A673 (cell line): ENCODE measurements at regions of chr15 and their contacts with region 1.

Region 1: DNA sequence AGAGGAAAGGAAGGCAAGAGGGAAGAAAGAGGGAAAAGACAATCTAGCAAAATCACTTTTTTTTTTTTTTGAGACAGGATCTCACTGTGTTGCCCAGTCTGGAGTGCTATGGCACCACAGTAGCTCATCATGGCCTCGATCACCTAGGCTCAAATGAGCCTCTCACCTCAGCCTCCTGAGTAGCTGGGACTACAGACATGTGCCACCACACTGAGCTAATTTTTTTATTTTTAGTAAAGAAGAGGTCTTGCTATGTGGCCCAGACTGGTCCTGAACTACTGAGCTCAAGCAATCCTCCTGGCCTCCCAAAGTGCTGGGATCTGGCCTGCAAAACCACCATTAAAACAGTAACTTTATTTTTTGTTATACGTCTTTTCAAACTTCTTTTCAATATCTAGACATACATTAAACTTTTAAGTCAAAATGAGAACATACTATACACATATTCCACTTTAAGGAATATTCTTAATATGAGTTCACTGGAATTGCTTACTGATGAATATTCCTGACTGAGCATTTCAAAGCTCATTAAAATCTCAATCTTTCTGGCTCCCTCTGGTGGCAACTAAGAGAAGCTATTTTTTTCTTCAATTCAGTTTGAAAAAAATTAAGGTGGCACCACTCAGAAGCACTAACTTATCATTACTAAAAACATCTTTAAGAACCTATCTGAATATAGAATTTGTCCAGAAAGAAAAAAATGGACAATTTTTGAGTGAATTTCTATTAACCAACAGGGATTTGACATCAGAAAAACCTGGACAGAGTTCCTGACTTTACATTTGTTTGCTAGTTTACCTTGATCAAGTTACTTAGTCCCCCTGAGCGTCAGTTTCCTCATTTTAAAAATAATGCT is 40.9 kb downstream of the UACA start:
- DNase-seq: peak; percentile 62
- H3K4me3 ChIP-seq: no peak overlapping the region
- H3K27ac ChIP-seq: no peak overlapping the region
- H3K4me1 ChIP-seq: no peaks in the 10 kb centered on the region
- H3K27me3 ChIP-seq: no peaks in the 10 kb centered on the region
- CTCF ChIP-seq: peak; percentile 79

Region 2: DNA sequence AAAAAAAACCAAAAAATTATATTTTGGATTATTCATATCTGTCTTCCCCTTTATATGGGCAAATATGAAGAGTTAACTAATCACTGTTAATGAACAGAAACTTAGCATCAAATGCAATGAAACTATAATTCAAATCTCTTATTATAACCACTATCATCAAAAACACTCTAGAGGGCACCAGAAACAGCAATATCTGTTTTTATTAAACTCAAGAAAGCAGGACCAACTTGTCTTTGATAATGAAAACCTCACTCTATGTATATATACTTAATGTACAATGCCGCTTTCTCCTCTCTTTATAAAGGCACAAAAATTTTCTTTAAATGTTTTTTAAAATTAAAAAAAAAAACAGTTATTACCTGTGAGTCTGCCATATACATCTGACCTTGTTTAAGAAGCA is 51.8 kb before region 1 on chr15:
- CTCF ChIA-PET with region 1: no interaction called
- POLR2A ChIA-PET with region 1: no interaction called
- intact Hi-C with region 1: loop called (anchors 10 kb)
- DNase-seq: peak; percentile 24
- H3K4me3 ChIP-seq: no peak overlapping the region
- H3K27ac ChIP-seq: no peak overlapping the region
- H3K4me1 ChIP-seq: peaks cover 19% of the 10 kb centered on the region
- H3K27me3 ChIP-seq: no peaks in the 10 kb centered on the region
- CTCF ChIP-seq: peak; percentile 55

Region 3: DNA sequence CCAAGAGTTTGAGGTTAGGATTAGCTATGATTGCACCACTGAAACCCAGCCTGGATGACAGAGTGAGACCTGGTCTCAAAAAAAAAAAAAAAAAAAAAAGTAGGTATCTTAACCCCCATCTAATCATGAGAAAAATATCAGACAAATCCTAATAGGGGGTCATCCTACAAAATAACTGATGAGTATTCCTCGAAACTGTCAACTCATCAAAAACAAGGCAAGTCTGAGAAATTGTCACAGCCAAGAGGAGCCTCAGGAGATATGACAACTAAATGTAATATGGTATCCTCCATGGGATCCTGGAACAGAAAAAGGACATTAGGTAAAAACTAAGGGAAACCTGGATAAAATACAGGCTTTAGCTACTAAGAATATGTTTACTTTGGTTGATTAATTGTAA is 240.7 kb after region 1 on chr15:
- CTCF ChIA-PET with region 1: interaction called, 11 read pairs
- POLR2A ChIA-PET with region 1: no interaction called
- intact Hi-C with region 1: no loop called
- DNase-seq: no peak
- H3K4me3 ChIP-seq: no peak overlapping the region
- H3K27ac ChIP-seq: no peak overlapping the region
- H3K4me1 ChIP-seq: no peaks in the 10 kb centered on the region
- H3K27me3 ChIP-seq: no peaks in the 10 kb centered on the region
- CTCF ChIP-seq: no peak

Region 4: GRCh38 chr15:71011503-71012155 is 289.1 kb after region 1 on chr15:
- CTCF ChIA-PET with region 1: no interaction called
- POLR2A ChIA-PET with region 1: no interaction called
- intact Hi-C with region 1: no loop called
- DNase-seq: peak; percentile 45
- H3K4me3 ChIP-seq: no peak overlapping the region
- H3K27ac ChIP-seq: no peak overlapping the region
- H3K4me1 ChIP-seq: no peaks in the 10 kb centered on the region
- H3K27me3 ChIP-seq: no peaks in the 10 kb centered on the region
- CTCF ChIP-seq: peak; percentile 73